ENCODE measurements at regions of chr9 and their contacts with region 1.

Region 1: GRCh38 chr9:72443855-72444254 is 77.6 kb upstream of the TMC1 start:
- DNase-seq: peak in 1 of 2 donors; percentile 43
- ATAC-seq: peak; percentile 69 to 76 (median 71)
- H3K4me3 ChIP-seq: no peak overlapping the region
- H3K4me3 Mint-ChIP-seq: no peak overlapping the region
- H3K27ac ChIP-seq: peak overlapping the region; percentile 16
- H3K27ac Mint-ChIP-seq: peak overlapping the region; percentile 15 to 46
- H3K4me1 ChIP-seq: peaks cover 14% of the 10 kb centered on the region
- H3K4me1 Mint-ChIP-seq: peaks cover 7 to 15% of the 10 kb centered on the region in 2 donors
- H3K27me3 ChIP-seq: no peaks in the 10 kb centered on the region
- H3K27me3 Mint-ChIP-seq: peaks cover 22 to 44% of the 10 kb centered on the region in 2 donors
- CTCF ChIP-seq: no peak

Region 2: GRCh38 chr9:72586388-72587130 is 142.7 kb after region 1 on chr9:
- intact Hi-C with region 1: loop called (anchors 5 kb)
- DNase-seq: peak in 1 of 2 donors; percentile 51
- ATAC-seq: peak; percentile 83 to 87 (median 84)
- H3K4me3 ChIP-seq: no peak overlapping the region
- H3K4me3 Mint-ChIP-seq: peak overlapping the region; percentile 7
- H3K27ac ChIP-seq: no peak overlapping the region
- H3K27ac Mint-ChIP-seq: peak overlapping the region; percentile 21 to 64
- H3K4me1 ChIP-seq: peaks cover 7% of the 10 kb centered on the region
- H3K4me1 Mint-ChIP-seq: peaks cover 18 to 19% of the 10 kb centered on the region in 2 donors
- H3K27me3 ChIP-seq: no peaks in the 10 kb centered on the region
- H3K27me3 Mint-ChIP-seq: peaks cover 5 to 15% of the 10 kb centered on the region in 2 donors
- CTCF ChIP-seq: no peak

Measured in natural killer cell (primary cell).